ENCODE measurements at regions of chr19 and their contacts with region 1.

Region 1: GRCh38 chr19:12365236-12366162 is at the start of gene ZNF442:
- DNase-seq: peak; percentile 82
- H3K4me3 ChIP-seq: peak within 1 kb of the TSS; percentile 91
- H3K27ac ChIP-seq: no peak within 1 kb of the TSS
- H3K27me3 ChIP-seq: no peaks in the 10 kb centered on the region
- CTCF ChIP-seq: peak; percentile 79
- polyA plus RNA-seq, gene ZNF442: 1.2 and 1.4 TPM in 2 replicates

Region 2: GRCh38 chr19:12333162-12334159 is 32.0 kb before region 1 on chr19 and contains the start of gene ZNF563:
- CTCF ChIA-PET with region 1: interaction called, 15 read pairs
- POLR2A ChIA-PET with region 1: interaction called, 11 read pairs
- DNase-seq: peak; percentile 72
- H3K4me3 ChIP-seq: peak within 1 kb of the TSS; percentile 85
- H3K27ac ChIP-seq: peak within 1 kb of the TSS; percentile 31
- H3K27me3 ChIP-seq: no peaks in the 10 kb centered on the region
- CTCF ChIP-seq: no peak
- polyA plus RNA-seq, gene ZNF563: 1.8 and 2.3 TPM in 2 replicates

Region 3: DNA sequence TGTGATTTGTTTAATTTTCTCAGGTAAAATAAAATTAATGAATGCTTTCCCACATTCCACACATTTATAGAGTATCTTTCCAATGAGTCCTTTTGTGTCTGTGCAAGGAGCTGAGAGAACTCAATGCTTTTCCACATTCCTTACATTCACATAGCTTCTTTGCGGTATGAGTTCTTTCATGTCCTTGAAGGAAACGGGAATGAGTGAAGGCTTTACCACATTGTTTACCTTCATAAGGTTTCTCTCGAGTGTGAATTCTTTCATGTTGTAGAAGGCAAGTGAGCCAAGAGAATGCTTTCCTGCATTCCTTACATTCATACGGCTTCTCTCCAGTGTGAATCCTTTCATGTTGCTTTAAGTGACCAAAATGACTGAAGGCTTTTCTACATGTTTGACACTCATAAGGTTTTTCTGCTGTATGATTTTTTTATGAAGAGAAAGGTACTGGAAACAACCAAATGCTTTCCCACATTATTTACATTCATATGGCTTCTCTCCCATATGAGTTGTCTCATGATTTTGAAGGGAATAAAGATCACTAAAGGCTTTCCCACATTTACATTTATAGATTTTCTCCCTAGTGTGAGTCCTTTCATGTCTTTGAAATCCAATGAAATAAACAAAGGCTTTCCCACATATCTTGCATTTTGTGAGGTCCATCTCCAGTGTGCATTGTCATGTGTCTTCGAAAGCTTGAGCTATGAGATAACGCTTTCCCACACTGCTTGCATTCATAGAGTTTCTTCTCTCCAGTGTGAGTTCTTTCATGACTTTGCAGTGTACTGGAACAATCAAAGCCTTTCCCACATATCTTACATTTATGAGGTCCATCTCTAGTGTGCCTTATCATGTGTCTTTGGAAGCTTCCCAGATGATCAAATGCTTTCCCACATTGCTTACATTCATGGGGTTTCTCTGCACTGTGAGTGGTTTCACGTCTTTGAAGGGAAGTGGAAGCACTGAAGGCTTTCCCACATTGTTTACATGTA is 14.5 kb after region 1 on chr19:
- CTCF ChIA-PET with region 1: no interaction called
- POLR2A ChIA-PET with region 1: no interaction called
- DNase-seq: no peak
- H3K4me3 ChIP-seq: no peak overlapping the region
- H3K27ac ChIP-seq: no peak overlapping the region
- H3K27me3 ChIP-seq: no peaks in the 10 kb centered on the region
- CTCF ChIP-seq: no peak

Measured in AG04450 (cell line).